ENCODE measurements at regions of chr12 and their contacts with region 1.

Region 1: GRCh38 chr12:47904713-47905310 is at the start of gene VDR:
- DNase-seq: peak; percentile 62
- H3K4me3 Mint-ChIP-seq: peak within 1 kb of the TSS; percentile 100
- H3K27ac Mint-ChIP-seq: peak within 1 kb of the TSS; percentile 99
- H3K4me1 Mint-ChIP-seq: peaks cover 53% of the 10 kb centered on the region
- H3K27me3 Mint-ChIP-seq: peaks cover 34% of the 10 kb centered on the region
- total RNA-seq, gene VDR: 305 and 318 TPM in 2 replicates

Region 2: GRCh38 chr12:47863467-47863866 is 41.3 kb before region 1 on chr12:
- intact Hi-C with region 1: loop called (anchors 1 kb)
- DNase-seq: no peak
- H3K4me3 Mint-ChIP-seq: no peak overlapping the region
- H3K27ac Mint-ChIP-seq: peak overlapping the region; percentile 80
- H3K4me1 Mint-ChIP-seq: peaks cover 92% of the 10 kb centered on the region
- H3K27me3 Mint-ChIP-seq: no peaks in the 10 kb centered on the region

Region 3: DNA sequence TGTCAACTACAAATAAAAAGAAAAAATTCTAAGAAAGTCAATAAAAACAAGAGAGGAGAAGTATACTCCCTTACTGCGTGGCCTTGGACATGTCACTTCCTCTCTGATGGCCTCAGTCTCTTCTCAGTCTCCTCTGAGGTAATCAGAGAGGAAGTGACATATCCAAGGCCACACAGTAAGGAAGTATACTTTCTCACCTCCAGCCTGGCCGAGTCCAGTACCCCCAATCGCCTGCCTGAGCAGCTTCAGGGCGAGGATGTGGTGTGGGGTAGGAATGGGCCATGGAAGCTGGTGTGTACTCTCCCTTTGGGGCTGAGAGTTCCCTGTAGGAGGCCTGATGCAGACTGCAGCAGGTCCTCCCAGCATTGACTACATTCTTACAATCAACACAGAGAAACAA is 15.8 kb before region 1 on chr12:
- intact Hi-C with region 1: loop called (anchors 1 kb)
- DNase-seq: peak; percentile 54
- H3K4me3 Mint-ChIP-seq: peak overlapping the region; percentile 86
- H3K27ac Mint-ChIP-seq: peak overlapping the region; percentile 100
- H3K4me1 Mint-ChIP-seq: peaks cover 95% of the 10 kb centered on the region
- H3K27me3 Mint-ChIP-seq: no peaks in the 10 kb centered on the region

Region 4: DNA sequence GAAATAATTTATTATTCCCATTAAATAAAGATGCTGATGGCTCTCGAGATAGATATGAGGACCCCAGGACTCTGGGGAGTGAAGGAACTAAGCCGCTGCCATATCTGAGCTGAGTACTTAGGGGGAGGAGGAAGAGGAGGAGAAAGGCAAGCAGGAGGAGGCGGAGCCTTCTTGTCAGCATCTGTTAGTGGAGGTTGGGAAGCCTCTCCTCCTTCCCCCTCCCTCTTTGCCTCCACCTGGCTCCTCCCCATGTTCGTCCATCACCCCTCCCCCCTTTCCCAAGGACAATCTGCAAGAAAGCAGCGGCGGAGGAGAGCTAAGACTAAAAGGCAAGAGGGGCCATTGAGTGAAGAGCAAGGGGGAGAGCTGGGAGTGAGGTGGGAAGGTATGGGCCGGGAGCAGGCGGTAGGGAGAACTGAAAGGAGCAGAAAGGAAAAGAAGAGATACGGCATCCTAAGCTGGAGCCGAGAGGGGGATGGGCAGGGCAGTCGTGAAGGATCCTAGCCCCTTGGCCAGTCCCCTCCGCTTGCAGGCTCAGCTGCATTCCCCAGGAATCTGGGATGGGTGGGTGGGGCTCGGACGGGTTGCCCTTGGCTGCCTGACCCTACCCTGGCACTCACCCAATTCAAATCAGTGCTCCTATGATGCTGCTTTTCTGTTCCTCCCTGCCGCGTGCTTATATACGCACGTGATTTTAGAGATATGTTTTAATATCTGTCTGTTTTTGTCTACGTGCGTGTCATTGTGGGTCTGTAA is 214.4 kb after region 1 on chr12 and contains the start of gene PFKM:
- intact Hi-C with region 1: loop called (anchors 1 kb)
- DNase-seq: peak; percentile 65
- H3K4me3 Mint-ChIP-seq: peak within 1 kb of the TSS; percentile 98
- H3K27ac Mint-ChIP-seq: peak within 1 kb of the TSS; percentile 75
- H3K4me1 Mint-ChIP-seq: peaks cover 17% of the 10 kb centered on the region
- H3K27me3 Mint-ChIP-seq: peaks cover 10% of the 10 kb centered on the region
- total RNA-seq, gene PFKM: 59.7 and 68.4 TPM in 2 replicates

Region 5: DNA sequence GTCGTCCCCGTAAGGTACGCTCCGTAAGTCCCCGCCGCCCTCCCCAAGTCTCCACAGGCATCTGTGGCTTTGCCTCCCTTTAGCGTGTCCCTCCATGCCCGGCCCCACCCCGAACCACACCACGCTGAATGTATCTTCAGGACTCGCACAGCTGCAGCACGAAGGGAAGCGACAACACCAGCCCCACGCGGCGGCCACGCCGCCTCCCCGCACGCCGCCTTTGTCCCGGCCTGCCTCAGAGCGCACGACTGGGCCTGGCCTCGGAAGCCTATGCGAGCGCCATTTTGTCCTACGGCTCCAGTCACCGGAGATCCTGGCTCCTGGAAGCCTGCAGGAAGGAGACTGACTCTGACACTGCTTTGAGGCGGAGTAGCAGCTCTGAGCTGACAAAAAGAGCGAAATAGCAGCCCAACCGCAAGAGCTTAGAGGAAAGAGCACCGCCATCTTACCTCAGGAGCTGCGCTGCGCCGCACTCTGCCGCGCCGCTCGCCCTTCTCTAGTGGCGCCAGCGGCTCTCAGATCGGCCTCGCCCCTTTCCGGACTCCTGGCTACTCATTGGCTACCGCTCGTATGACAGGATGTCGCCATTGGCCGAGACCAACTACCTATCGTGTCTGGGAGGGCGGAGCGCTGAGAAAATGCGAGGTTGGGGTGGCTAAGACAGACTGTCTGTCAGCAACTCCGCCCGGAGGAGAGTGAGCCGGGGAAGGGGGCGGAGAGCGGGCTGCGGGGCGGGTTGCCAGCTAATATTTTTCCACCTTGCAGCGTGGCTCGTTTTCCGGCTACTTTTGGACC is 777.1 kb after region 1 on chr12 and contains the start of gene KANSL2:
- intact Hi-C with region 1: loop called (anchors 1 kb)
- DNase-seq: peak; percentile 97
- H3K4me3 Mint-ChIP-seq: peak within 1 kb of the TSS; percentile 99
- H3K27ac Mint-ChIP-seq: peak within 1 kb of the TSS; percentile 96
- H3K4me1 Mint-ChIP-seq: peaks cover 44% of the 10 kb centered on the region
- H3K27me3 Mint-ChIP-seq: no peaks in the 10 kb centered on the region
- total RNA-seq, gene KANSL2: 65.3 and 66.4 TPM in 2 replicates